ENCODE measurements at regions of chr1 and their contacts with region 1.

Region 1: GRCh38 chr1:156591432-156592157 is at the start of gene NAXE:
- DNase-seq: no peak
- ATAC-seq: peak; percentile 97
- H3K4me3 ChIP-seq: peak within 1 kb of the TSS; percentile 89
- H3K27ac ChIP-seq: peak within 1 kb of the TSS; percentile 86
- H3K4me1 ChIP-seq: peaks cover 5% of the 10 kb centered on the region
- H3K27me3 ChIP-seq: no peaks in the 10 kb centered on the region
- CTCF ChIP-seq: 0 out of 6 replicates have a peak, but pooled peaks of 1 of the 3 experiments have one; percentile 1
- EP300 ChIP-seq: no peak
- POLR2A ChIP-seq: peak; percentile 91
- RAD21 ChIP-seq: no peak
- polyA plus RNA-seq, gene NAXE: 18.1 to 65.1 TPM

Region 2: GRCh38 chr1:156489166-156489934 is 102.2 kb before region 1 on chr1:
- CTCF ChIA-PET with region 1: interaction called, 3 read pairs
- POLR2A ChIA-PET with region 1: interaction called, 20 read pairs
- RAD21 ChIA-PET with region 1: interaction called, 7 read pairs
- SMC1A ChIA-PET with region 1: interaction called, 5 read pairs
- in situ Hi-C with region 1: no loop called
- intact Hi-C with region 1: no loop called
- DNase-seq: no peak
- ATAC-seq: peak; percentile 16
- H3K4me3 ChIP-seq: peak overlapping the region; percentile 73
- H3K27ac ChIP-seq: peak overlapping the region; percentile 96
- H3K4me1 ChIP-seq: peaks cover 86% of the 10 kb centered on the region
- H3K27me3 ChIP-seq: no peaks in the 10 kb centered on the region
- CTCF ChIP-seq: peak in 1 of 3 experiments; percentile 33; a peak in 1 of 6 replicates
- EP300 ChIP-seq: peak in 1 of 2 experiments; percentile 42; a peak in 2 of 4 replicates
- POLR2A ChIP-seq: peak; percentile 48
- RAD21 ChIP-seq: no peak; the same call in 1 of the 2 replicates

Region 3: GRCh38 chr1:157325220-157325619 is 733.6 kb after region 1 on chr1:
- CTCF ChIA-PET with region 1: no interaction called
- POLR2A ChIA-PET with region 1: no interaction called
- RAD21 ChIA-PET with region 1: no interaction called
- SMC1A ChIA-PET with region 1: no interaction called
- in situ Hi-C with region 1: no loop called
- intact Hi-C with region 1: no loop called
- DNase-seq: no peak
- ATAC-seq: no peak
- H3K4me3 ChIP-seq: no peak overlapping the region
- H3K27ac ChIP-seq: no peak overlapping the region
- H3K4me1 ChIP-seq: no peaks in the 10 kb centered on the region
- H3K27me3 ChIP-seq: no peaks in the 10 kb centered on the region; a peak in 3 of 4 replicates
- CTCF ChIP-seq: no peak
- EP300 ChIP-seq: no peak
- POLR2A ChIP-seq: no peak
- RAD21 ChIP-seq: no peak

Measured in GM12878 (cell line).